Activated T-helper 1 cell treated with anti-CD3 and anti-CD28 coated beads, Interleukin-12 subunit alpha, Interleukin-12 subunit beta, Interleukin-2, Interleukin-4 antibody, amounts not matched to agents 30 ng/mL and 10 ng/mL and 1 ng/mL, durations not matched to agents 14 hours and 24 hours and 36 hours (primary cell): ENCODE measurements at regions of chrX and their contacts with region 1.

Region 1: GRCh38 chrX:40266490-40267333 is 169.0 kb upstream of the BCOR start:
- DNase-seq: peak; percentile 8
- H3K4me3 Mint-ChIP-seq: peak overlapping the region; percentile 73
- H3K27ac Mint-ChIP-seq: no peak overlapping the region
- H3K4me1 Mint-ChIP-seq: peaks cover 6% of the 10 kb centered on the region
- H3K27me3 Mint-ChIP-seq: peaks cover 2% of the 10 kb centered on the region

Region 2: GRCh38 chrX:39652336-39653131 is 614.2 kb before region 1 on chrX:
- intact Hi-C with region 1: loop called (anchors 5 kb)
- DNase-seq: peak; percentile 1
- H3K4me3 Mint-ChIP-seq: no peak overlapping the region
- H3K27ac Mint-ChIP-seq: peak overlapping the region; percentile 13
- H3K4me1 Mint-ChIP-seq: peaks cover 7% of the 10 kb centered on the region
- H3K27me3 Mint-ChIP-seq: peaks cover 4% of the 10 kb centered on the region

Region 3: DNA sequence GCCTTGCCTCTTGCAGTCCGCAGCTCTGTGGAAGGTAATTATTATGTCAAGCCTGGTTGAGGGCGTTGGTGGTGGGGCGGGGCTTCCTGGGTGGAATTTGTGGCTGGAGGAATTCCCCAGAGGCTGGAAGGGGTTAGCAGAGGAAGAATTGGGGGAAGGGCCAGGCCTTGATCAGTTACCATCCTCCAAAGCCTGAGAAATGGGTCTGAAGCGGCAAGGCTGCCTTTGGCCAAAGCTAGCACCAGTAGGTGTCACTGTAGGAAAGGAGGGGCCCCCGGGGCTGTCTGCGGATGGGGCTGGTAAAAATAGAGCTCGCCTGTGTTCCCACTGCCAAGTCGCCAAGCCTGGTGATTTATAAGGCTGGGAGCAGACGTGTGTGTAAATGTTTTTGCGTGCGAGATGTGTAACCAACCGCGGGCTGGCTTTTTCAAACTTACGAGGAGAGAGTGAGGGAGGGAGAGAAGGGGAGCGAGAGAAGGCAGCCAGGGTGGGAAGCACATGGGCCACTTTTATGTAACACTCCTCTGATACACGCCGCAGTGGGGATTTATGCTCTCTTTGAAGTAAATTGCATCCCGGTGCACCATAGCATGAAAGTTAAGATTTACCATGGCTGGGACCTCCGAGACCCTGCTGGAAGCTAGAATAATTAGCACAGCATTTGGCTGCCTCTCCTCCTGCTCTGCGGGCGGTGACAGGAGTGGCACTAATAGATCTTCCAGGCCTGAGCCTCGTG is 535.9 kb before region 1 on chrX:
- intact Hi-C with region 1: loop called (anchors 10 kb)
- DNase-seq: peak; percentile 31
- H3K4me3 Mint-ChIP-seq: peak overlapping the region; percentile 54
- H3K27ac Mint-ChIP-seq: peak overlapping the region; percentile 84
- H3K4me1 Mint-ChIP-seq: peaks cover 30% of the 10 kb centered on the region
- H3K27me3 Mint-ChIP-seq: no peaks in the 10 kb centered on the region

Region 4: GRCh38 chrX:40068044-40068443 is 198.7 kb before region 1 on chrX:
- intact Hi-C with region 1: no loop called
- DNase-seq: peak; percentile 17
- H3K4me3 Mint-ChIP-seq: no peak overlapping the region
- H3K27ac Mint-ChIP-seq: peak overlapping the region; percentile 50
- H3K4me1 Mint-ChIP-seq: peaks cover 67% of the 10 kb centered on the region
- H3K27me3 Mint-ChIP-seq: no peaks in the 10 kb centered on the region

Region 5: DNA sequence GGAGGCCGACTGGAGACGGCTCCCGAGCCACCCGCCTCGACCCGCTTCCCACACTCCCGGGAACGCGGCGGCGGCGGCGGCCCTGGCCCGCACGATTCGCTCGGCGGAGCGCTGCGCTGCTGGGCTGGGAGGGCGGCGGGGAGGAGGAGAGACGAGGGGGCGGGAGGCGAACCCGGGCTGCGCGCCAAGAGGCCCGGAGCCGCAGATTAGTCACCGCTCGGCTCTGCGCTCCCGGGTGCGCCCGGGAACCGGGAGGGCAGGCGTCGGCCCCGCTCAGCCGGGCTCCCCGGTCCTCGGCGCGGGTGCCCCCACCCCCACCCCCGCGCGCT is 157.8 kb before region 1 on chrX:
- intact Hi-C with region 1: loop called (anchors 5 kb)
- DNase-seq: peak; percentile 30
- H3K4me3 Mint-ChIP-seq: no peak overlapping the region
- H3K27ac Mint-ChIP-seq: no peak overlapping the region
- H3K4me1 Mint-ChIP-seq: peaks cover 6% of the 10 kb centered on the region
- H3K27me3 Mint-ChIP-seq: peaks cover 3% of the 10 kb centered on the region

Region 6: DNA sequence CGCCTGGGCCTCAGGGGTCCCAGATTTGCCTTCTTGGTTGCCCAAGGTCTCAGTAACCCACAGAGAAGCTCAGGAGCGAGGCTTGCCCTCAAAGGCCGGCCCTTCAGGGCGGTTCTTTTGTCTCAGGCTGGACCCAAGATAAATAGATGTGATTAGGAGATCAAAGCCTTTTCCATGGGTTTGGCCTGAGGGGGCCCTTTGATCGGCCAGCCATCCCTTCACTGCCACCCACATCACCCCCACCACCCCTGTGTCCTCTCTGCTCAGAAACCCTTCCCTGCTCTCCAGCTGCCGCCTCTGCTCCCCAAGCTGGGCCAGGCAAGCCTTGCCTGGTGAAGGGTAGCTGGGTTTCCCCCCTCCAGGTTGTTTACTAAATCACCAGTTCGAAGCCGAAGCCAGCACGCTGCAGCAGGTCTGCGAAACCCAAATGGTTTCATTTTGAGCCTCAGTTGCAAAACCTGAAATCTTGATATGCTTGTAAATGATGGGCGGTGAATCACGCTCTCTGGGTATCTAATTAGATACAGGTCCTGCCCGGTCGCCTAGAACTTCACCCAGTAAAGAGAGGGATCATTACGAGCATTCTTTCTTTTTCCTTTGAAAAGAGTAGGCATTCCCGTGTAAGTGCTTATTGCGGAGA is 33.7 kb after region 1 on chrX:
- intact Hi-C with region 1: no loop called
- DNase-seq: no peak
- H3K4me3 Mint-ChIP-seq: no peak overlapping the region
- H3K27ac Mint-ChIP-seq: no peak overlapping the region
- H3K4me1 Mint-ChIP-seq: peaks cover 11% of the 10 kb centered on the region
- H3K27me3 Mint-ChIP-seq: peaks cover 2% of the 10 kb centered on the region